ENCODE measurements at regions of chr4 and their contacts with region 1.

Region 1: GRCh38 chr4:2220016-2220630 is 21.8 kb downstream of the HAUS3 start:
- DNase-seq: peak; percentile 64 to 88 (median 74)
- ATAC-seq: peak; percentile 84 to 85
- H3K4me3 ChIP-seq: no peak overlapping the region
- H3K27ac ChIP-seq: no peak overlapping the region
- H3K4me1 ChIP-seq: no peaks in the 10 kb centered on the region
- H3K27me3 ChIP-seq: no peaks in the 10 kb centered on the region

Region 2: DNA sequence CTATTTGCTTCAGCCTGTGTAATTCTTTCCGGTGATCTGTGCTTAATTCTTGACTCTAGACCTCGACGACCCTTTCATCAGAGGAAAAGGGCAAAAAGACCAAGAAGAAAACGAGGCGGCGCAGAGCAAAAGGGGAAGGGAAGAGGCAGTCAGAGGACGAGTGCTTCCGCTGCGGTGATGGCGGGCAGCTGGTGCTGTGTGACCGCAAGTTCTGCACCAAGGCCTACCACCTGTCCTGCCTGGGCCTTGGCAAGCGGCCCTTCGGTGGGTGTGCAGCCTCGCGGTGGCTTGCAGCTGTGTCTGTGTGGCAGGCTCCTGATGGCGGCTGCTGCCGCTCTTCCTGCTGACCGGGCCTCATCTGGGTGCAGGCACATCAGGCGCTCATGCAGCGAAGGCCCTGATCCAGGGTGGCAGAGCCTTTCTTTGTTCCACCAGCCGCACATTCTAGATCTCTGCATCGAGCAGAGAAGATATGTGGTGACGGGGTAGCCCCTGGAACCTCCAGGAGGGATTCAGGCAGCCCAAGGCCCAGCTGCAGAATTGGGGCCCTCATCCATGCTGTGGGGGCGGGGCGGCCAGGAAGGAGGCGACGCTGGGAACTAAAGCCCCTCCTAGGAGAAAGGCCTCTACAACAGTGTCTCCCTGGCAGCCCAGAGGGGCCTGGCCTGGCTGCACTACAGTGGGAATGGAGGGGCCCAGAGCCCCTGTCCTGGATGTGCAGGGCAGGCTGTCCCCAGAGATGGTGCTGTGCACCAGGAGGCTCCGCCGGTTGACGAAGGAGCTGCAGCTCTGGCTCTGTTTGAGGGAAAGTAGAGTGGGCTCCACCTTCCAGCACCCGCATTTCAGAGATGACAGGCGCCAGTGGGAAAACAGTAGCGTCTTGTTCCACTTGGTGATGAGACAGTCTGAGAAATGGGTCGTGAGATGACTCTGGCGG is 243.4 kb before region 1 on chr4:
- intact Hi-C with region 1: no loop called
- DNase-seq: no peak
- ATAC-seq: no peak
- H3K4me3 ChIP-seq: no peak overlapping the region
- H3K27ac ChIP-seq: no peak overlapping the region
- H3K4me1 ChIP-seq: no peaks in the 10 kb centered on the region
- H3K27me3 ChIP-seq: no peaks in the 10 kb centered on the region

Region 3: DNA sequence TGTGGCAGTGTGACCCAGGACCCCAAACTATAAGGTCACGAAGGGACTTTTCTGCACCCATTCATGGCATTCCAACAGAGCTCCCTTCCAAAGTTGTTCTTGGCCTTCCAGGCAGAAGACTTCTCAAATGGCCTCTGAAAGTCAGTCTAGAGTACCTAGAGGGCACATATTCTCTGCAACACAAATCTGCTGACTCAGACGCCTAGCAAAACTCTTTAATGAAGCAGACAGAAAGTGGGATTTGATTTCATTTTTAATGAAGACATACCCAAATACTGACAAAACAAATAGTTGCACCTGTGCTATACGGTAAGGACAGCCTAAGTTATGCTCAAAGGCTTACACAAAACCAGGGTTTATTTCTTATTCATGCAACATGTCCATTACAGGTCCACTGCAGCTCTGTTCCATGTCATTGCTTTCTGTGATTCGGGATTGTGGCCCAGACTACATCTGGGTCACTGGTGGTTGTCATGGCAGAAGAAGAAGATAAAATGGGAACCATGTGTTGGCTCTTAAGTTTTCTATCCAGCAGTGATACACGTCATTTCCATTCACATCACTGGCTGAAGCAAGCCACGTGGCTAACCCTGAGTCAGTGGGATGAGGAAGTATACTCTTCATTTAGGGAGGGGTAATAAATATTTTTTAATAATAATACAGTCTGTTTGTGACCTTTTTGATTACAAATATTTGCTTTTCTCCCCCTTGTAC is 103.3 kb before region 1 on chr4:
- intact Hi-C with region 1: no loop called
- DNase-seq: no peak
- ATAC-seq: no peak
- H3K4me3 ChIP-seq: no peak overlapping the region
- H3K27ac ChIP-seq: no peak overlapping the region
- H3K4me1 ChIP-seq: no peaks in the 10 kb centered on the region
- H3K27me3 ChIP-seq: no peaks in the 10 kb centered on the region

Region 4: DNA sequence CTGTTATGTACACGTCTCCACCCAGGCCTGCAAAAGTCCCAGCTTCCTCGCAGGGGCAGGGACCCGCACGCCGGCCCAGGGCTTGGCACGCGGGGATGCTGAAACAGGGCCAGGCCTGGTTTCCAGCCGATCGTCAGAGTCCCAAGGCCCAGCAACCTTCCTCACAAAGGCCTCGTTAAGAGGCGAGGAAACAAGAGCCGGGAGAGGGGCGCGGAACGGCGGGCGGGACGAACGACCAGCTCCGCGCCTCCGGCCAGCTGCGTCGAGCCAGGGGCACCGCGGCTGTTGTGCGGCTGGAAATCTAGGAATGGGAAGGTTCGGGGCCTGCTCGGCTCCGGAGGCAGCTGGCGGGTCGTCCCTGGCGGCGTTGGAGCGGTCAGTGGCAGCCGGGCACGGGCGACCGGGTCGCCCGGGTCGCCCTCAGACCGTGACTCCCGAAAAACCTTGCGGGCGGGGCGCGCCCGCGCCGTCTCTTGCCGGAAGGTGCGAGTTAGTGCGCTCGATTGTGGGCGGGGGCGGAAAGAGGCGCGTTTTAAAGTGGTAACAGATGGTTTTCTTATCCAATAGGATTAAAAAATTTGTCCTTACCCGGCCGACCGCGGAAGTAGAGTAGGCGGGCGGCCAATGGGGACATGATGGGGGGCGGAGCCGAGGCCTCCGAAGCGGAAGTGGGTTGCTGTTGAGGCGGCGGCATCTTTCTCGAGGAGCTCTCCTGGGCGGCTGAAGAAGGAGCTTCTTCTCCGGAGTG is 248.5 kb after region 1 on chr4 and contains the start of gene RNF4:
- intact Hi-C with region 1: loop called in 2 of 4 experiments (anchors 10 kb)
- DNase-seq: peak; percentile 96 to 99 (median 98)
- ATAC-seq: peak; percentile 96
- H3K4me3 ChIP-seq: peak within 1 kb of the TSS; percentile 78
- H3K27ac ChIP-seq: peak within 1 kb of the TSS; percentile 96
- H3K4me1 ChIP-seq: no peaks in the 10 kb centered on the region
- H3K27me3 ChIP-seq: no peaks in the 10 kb centered on the region
- total RNA-seq, gene RNF4: 28.2 to 35.7 (median 32.1) TPM

Measured in right cardiac atrium (tissue), 5 donors.